Uterus (tissue), 4 donors: ENCODE measurements at regions of chr20 and their contacts with region 1.

Region 1: DNA sequence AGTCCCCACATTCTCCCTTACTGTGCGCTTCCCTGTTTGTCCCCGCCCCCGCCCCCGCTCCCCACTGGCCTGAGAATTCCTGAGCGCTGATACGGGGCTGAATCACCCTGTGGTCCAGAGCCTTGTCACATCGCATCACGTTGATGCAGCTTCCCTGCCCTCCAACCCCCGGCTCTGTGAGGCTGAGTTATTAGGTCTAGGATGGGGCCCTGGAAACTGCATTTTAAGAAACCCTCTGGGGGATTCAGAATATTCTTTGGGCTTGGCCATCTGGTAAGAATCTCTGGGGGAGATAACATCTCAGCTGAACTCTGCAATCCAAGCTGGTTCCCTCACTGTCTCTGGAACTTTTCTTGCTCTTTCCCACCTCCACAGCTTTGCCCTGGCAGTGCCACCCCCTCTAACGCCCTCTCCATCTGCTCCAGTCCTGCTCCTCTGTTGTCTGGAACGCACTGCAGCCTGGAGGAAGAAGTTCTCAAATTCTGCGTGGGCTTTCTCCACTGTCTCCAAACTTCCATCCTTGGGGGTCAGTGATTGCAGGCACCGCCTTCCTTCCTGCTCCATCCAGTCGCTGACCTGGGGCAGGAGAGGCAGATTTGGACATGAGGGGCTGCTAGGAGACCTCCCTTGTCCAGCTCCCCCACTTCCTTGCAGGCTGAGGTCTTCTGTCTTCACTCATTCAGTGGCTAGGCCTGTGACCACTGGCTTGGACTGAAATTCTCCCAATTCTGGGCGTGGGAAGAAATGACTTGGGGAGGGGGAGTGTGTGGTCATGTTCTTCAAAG is 42.6 kb downstream of the KIAA1755 start:
- DNase-seq: peak; percentile 78
- H3K4me3 ChIP-seq: no peak overlapping the region
- H3K27ac ChIP-seq: peak overlapping the region; percentile 78 to 80
- H3K4me1 ChIP-seq: peaks cover 0 to 5% of the 10 kb centered on the region in 2 donors
- H3K27me3 ChIP-seq: no peaks in the 10 kb centered on the region
- CTCF ChIP-seq: no peak
- POLR2A ChIP-seq: no peak

Region 2: GRCh38 chr20:38057351-38057972 is 160.5 kb before region 1 on chr20:
- intact Hi-C with region 1: loop called (anchors 5 kb)
- DNase-seq: peak; percentile 82 to 90
- H3K4me3 ChIP-seq: no peak overlapping the region
- H3K27ac ChIP-seq: peak overlapping the region in 1 of 2 donors; percentile 21
- H3K4me1 ChIP-seq: peaks cover 0 to 4% of the 10 kb centered on the region in 2 donors
- H3K27me3 ChIP-seq: no peaks in the 10 kb centered on the region
- CTCF ChIP-seq: peak; percentile 82 to 90 (median 88)
- POLR2A ChIP-seq: no peak

Region 3: GRCh38 chr20:38134387-38135270 is 83.4 kb before region 1 on chr20:
- intact Hi-C with region 1: no loop called
- DNase-seq: no peak
- H3K4me3 ChIP-seq: no peak overlapping the region
- H3K27ac ChIP-seq: peak overlapping the region; percentile 57 to 60
- H3K4me1 ChIP-seq: peaks cover 0 to 6% of the 10 kb centered on the region in 2 donors
- H3K27me3 ChIP-seq: no peaks in the 10 kb centered on the region
- CTCF ChIP-seq: no peak
- POLR2A ChIP-seq: no peak

Region 4: DNA sequence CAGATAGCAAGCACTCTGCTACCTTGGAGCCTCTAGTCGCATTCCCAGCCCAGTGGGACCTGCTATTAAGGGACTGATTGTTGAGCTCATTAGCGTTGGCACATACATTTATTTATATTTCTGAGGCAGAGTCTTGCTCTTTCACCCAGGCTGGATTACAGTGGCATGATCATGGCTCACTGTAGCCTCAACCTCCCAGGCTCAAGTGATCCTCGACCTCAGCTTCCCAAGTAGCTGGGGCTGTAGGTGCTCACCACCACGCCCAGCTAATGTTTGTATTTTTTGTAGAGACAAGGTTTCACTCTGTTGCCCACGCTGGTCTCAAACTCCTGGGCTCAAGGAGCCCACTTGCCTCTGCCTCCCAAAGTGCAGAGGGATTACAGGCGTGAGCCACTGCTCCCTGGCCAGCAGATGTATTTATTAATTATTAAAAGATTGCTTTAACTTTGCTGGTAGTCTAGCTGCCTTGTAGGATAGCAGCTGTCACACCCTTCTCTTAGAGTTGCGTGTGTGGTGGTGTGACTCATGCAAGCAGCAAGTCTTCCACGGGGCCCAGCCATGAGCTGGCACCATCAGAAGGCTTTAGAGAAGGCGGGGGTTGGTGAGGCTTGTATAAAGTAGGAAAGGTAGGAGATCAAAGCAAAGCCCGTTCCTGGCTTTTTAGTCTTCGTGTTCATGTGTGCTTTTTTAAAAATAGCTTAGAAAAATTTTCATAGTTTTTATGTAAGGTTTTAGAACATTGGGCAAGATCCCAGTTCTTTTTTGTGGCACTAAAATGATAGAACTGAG is 546.8 kb after region 1 on chr20:
- intact Hi-C with region 1: no loop called
- DNase-seq: no peak
- H3K4me3 ChIP-seq: no peak overlapping the region
- H3K27ac ChIP-seq: no peak overlapping the region
- H3K4me1 ChIP-seq: no peaks in the 10 kb centered on the region
- H3K27me3 ChIP-seq: no peaks in the 10 kb centered on the region
- CTCF ChIP-seq: no peak
- POLR2A ChIP-seq: no peak